IMR-90 (cell line): ENCODE measurements at regions of chr6 and their contacts with region 1.

Region 1: DNA sequence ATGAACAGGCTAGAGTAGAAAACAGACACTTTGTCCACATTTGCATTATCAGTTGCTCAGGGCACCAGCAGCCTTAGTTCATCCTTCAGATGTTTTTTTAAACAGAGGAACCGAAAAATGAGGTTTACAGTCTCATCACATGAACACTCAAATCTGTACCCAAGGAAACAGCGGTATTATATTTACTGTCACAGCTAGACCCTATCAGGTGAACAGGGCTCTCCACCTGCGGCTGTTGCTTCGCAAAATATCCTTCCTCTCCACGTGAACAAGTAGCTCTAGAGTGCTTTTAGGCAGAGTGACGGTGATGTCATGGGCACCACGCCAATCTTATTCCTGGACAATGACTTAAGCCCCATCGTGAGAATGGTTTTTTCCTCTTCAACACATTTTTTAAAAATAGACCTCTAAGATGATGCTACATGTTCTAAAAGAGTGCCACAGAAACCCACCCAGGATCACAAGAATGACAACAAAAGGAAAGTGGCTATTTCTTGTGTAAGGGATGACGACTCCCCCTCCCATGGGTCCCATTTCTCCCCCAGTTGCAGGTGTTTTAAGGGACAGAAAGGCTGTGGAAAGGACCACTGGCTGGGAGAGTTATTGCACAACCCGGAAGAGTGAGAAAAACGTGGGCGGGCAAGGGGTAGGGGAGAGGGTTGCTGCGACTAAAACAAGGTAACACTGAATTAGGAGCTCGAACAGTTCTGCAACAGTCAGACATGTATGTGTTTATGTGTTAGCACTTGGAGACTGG is 77.7 kb downstream of the EFHC1 start:
- DNase-seq: peak; percentile 58
- ATAC-seq: no peak
- H3K4me3 ChIP-seq: no peak overlapping the region
- H3K27ac ChIP-seq: no peak overlapping the region
- H3K4me1 ChIP-seq: peaks cover 16% of the 10 kb centered on the region
- H3K27me3 ChIP-seq: no peaks in the 10 kb centered on the region
- CTCF ChIP-seq: no peak
- POLR2A ChIP-seq: no peak
- RAD21 ChIP-seq: no peak

Region 2: DNA sequence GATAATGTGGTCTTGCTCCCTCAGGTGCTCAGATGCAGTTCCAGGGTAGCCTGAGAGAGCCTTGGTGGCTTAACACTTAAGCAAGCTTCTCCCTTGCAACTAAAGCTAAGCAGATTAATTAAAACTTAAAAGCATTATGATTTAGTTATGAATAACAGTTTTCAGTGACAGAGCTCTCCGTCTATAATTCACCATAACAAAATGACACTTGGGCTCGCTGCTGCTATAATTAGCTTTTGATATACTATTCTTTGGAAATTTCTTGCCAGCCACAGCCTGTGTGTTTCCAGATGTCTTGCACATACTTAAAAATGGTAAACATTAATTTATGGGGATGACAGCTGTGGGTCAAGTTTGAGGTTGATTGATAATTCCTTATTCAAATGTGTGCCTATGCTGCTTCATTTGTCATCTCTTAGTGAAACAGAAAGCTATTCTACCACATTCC is 1298.7 kb before region 1 on chr6:
- CTCF ChIA-PET with region 1: no interaction called
- POLR2A ChIA-PET with region 1: no interaction called
- dilution Hi-C with region 1: no loop called
- in situ Hi-C with region 1: no loop called
- intact Hi-C with region 1: loop called (anchors 10 kb)
- DNase-seq: no peak
- ATAC-seq: no peak
- H3K4me3 ChIP-seq: no peak overlapping the region
- H3K27ac ChIP-seq: no peak overlapping the region
- H3K4me1 ChIP-seq: no peaks in the 10 kb centered on the region
- H3K27me3 ChIP-seq: no peaks in the 10 kb centered on the region
- CTCF ChIP-seq: no peak
- POLR2A ChIP-seq: no peak
- RAD21 ChIP-seq: no peak